ENCODE measurements at regions of chr16 and their contacts with region 1.

Region 1: DNA sequence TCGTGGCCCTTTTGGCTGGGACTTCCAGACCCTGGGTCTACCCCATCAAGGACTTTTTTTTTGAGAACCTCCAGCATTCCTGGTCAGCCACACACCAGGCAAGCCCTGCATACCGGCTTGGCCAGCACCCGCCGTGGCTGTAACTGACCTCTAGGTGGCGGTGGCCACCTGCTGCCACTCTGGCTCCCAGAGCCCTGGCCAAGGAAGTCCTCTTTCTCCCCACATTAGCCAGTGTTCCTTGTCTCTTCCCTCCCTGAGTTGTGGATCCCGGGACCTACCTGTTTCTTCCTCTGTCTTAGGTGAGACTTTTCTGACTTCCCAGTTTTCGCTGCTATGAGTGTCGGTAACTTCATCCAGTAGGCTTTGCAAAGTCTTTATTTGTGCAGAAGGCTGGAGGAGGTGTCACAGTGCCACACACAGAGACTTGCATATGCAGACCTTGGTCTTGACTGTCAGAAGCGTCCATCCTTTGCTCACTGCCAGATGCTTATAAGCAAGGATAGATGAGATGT is 348.3 kb downstream of the CPPED1 start:
- DNase-seq: peak; percentile 31 to 84
- H3K4me3 ChIP-seq: no peak overlapping the region
- H3K27ac ChIP-seq: no peak overlapping the region
- H3K4me1 ChIP-seq: peaks cover 0 to 2% (median under 1%) of the 10 kb centered on the region in 4 experiments; a peak in 1 of 7 replicates
- H3K27me3 ChIP-seq: no peaks in the 10 kb centered on the region
- CTCF ChIP-seq: peak; percentile 84 to 95 (median 86)
- EP300 ChIP-seq: no peak
- POLR2A ChIP-seq: no peak
- RAD21 ChIP-seq: peak; percentile 92 to 93

Region 2: DNA sequence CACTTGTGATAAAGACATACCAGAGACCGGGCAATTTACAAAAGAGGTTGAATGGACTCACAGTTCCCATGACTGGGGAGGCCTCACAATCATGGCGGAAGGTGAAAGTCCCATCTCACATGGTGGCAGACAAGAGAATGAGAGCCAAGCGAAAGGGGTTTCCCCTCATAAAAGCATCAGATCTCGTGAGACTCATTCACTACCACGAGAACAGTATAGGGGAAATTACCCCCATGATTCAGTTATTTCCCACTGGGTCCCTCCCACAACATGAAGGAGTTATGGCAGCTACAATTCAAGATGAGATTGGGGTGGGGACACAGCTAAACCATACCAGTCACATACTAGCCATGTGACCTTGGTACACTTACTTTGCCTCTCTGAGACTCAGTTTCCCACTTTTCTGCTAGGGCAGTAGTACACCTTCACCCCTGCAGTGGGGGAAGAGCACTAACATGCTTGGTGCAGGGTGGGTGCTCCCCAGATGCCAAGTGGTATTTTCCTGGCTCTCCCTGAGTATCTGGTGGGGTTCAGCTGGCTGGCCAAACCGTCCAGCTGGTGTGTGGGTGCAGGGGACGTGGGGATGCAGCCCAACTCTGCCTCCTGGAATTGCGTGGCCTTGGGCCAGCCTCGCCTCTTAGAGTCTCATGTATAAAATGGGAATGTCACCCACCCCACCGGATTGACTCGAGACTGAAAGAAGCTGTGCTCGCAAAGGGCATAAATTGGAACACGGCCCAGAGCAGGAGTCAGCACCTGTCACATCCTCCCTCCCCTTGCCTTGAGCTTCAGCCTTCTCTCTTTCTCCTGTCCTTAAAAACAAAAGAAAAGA is 15.7 kb before region 1 on chr16:
- CTCF ChIA-PET with region 1: interaction called, 12 read pairs
- POLR2A ChIA-PET with region 1: no interaction called
- DNase-seq: no peak
- H3K4me3 ChIP-seq: no peak overlapping the region
- H3K27ac ChIP-seq: no peak overlapping the region
- H3K4me1 ChIP-seq: peaks cover 0 to 17% (median 14%) of the 10 kb centered on the region in 4 experiments; a peak in 6 of 7 replicates
- H3K27me3 ChIP-seq: 0 out of 7 replicates have a peak, but pooled peaks cover 0 to 2% (median 0%) of the 10 kb centered on the region in 4 experiments
- CTCF ChIP-seq: no peak
- EP300 ChIP-seq: no peak
- POLR2A ChIP-seq: no peak
- RAD21 ChIP-seq: no peak

Region 3: DNA sequence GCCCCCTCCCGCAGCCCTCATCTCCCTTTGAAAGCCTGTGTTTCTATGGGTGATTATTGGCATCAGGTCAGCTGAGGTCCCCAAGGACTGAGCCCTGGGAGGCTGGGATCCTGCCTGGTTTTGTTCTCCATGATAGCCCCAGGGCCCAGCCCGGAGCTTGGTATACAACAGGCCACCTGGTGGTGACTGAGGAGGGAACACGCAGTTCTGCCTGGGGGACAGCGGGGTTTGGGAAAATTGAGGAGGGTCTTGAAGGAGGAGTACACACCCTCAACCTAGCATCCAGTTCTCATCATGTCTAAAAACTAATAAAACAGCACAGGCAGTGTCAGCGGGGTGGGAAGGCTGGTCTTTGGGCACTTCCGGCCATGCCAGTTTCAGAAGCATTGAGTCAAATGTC is 13.2 kb after region 1 on chr16:
- CTCF ChIA-PET with region 1: interaction called, 13 read pairs
- POLR2A ChIA-PET with region 1: no interaction called
- DNase-seq: peak in 1 of 2 experiments; percentile 66
- H3K4me3 ChIP-seq: no peak overlapping the region
- H3K27ac ChIP-seq: no peak overlapping the region
- H3K4me1 ChIP-seq: peaks cover 0 to 7% (median 2%) of the 10 kb centered on the region in 4 experiments; a peak in 3 of 7 replicates
- H3K27me3 ChIP-seq: no peaks in the 10 kb centered on the region
- CTCF ChIP-seq: peak; percentile 69 to 80 (median 76)
- EP300 ChIP-seq: no peak
- POLR2A ChIP-seq: no peak
- RAD21 ChIP-seq: peak; percentile 49 to 67

Measured in H1 (cell line).